CD8-positive, alpha-beta T cell (primary cell): ENCODE measurements at regions of chr3 and their contacts with region 1.

Region 1: GRCh38 chr3:27357665-27358258 is 11.4 kb downstream of the NEK10 start:
- DNase-seq: peak; percentile 11 to 77 (median 54)
- ATAC-seq: peak; percentile 87
- H3K4me3 ChIP-seq: no peak overlapping the region
- H3K4me3 Mint-ChIP-seq: no peak overlapping the region
- H3K27ac ChIP-seq: no peak overlapping the region
- H3K27ac Mint-ChIP-seq: no peak overlapping the region
- H3K4me1 ChIP-seq: peaks cover 13% of the 10 kb centered on the region
- H3K4me1 Mint-ChIP-seq: peaks cover 27% of the 10 kb centered on the region
- H3K27me3 ChIP-seq: no peaks in the 10 kb centered on the region
- H3K27me3 Mint-ChIP-seq: no peaks in the 10 kb centered on the region
- CTCF ChIP-seq: no peak

Region 2: DNA sequence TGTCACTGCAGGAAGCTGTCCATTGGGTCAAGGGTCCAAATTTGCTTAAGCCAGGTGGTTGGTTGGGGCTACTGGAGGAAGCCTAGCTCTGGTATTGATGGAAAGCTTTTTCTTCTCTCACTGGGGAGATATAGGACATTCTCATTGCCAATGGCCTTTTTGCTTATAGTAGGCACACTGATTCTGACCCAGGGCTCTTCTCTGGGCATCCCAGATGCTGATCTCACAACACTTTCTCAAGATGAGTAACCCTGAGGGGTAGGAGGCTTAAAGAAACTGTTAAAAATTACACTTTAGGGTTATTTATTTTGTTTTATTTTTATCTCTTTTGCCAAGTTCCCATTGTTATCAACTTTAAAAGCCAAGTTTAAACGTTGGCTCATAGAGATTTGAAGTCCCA is 397.4 kb before region 1 on chr3:
- CTCF ChIA-PET with region 1: no interaction called
- POLR2A ChIA-PET with region 1: no interaction called
- intact Hi-C with region 1: no loop called
- DNase-seq: no peak
- ATAC-seq: no peak
- H3K4me3 ChIP-seq: no peak overlapping the region
- H3K4me3 Mint-ChIP-seq: no peak overlapping the region
- H3K27ac ChIP-seq: no peak overlapping the region
- H3K27ac Mint-ChIP-seq: no peak overlapping the region
- H3K4me1 ChIP-seq: no peaks in the 10 kb centered on the region
- H3K4me1 Mint-ChIP-seq: no peaks in the 10 kb centered on the region
- H3K27me3 ChIP-seq: no peaks in the 10 kb centered on the region
- H3K27me3 Mint-ChIP-seq: no peaks in the 10 kb centered on the region
- CTCF ChIP-seq: no peak

Region 3: GRCh38 chr3:27340534-27340933 is 17.2 kb before region 1 on chr3:
- CTCF ChIA-PET with region 1: no interaction called
- POLR2A ChIA-PET with region 1: no interaction called
- intact Hi-C with region 1: no loop called
- DNase-seq: no peak
- ATAC-seq: no peak
- H3K4me3 ChIP-seq: no peak overlapping the region
- H3K4me3 Mint-ChIP-seq: no peak overlapping the region
- H3K27ac ChIP-seq: no peak overlapping the region
- H3K27ac Mint-ChIP-seq: no peak overlapping the region
- H3K4me1 ChIP-seq: no peaks in the 10 kb centered on the region
- H3K4me1 Mint-ChIP-seq: peaks cover 3% of the 10 kb centered on the region
- H3K27me3 ChIP-seq: peaks cover 0 to 2% of the 10 kb centered on the region in 2 experiments
- H3K27me3 Mint-ChIP-seq: no peaks in the 10 kb centered on the region
- CTCF ChIP-seq: no peak

Region 4: DNA sequence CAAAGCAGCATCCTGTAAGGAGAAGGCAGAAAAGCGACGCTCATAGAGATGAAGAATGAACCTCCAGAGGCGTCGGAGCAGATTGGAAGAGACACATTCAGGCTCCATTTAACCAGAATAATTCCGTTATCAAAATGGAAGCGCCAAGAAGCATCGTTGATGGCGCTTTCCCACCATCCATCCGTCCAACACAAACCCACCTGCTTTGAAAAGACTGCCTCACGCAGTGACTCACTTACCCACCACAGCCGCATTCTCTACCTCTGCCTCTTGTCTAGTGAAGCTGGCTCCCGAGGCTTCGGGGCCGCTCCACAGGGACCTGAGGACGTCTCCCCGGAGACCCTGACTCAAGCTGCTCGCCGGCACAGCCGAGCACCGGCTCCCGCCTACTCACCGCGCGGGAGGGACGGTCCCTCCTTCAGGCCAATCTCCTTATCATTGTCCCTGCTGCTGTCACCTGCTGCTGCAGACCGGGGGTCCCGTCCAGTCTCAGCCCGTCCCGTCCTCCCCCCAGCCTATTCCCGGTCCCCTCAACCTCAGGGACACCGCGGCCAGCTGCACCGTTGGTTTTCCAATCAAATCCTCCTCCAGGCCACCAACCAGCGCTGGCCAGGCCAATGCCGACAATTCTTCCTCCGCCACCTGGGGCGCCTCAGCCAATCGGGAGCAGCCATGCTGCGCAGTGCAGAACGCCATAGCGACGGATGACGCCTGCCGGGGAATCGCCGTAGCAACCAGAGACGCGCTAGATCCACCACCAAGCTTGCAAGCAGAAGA is 11.3 kb after region 1 on chr3 and contains the start of gene NEK10:
- CTCF ChIA-PET with region 1: interaction called, 9 read pairs
- POLR2A ChIA-PET with region 1: interaction called, 3 read pairs
- intact Hi-C with region 1: loop called in 1 of 2 experiments (anchors 1 kb)
- DNase-seq: peak; percentile 86 to 94 (median 93)
- ATAC-seq: peak; percentile 96
- H3K4me3 ChIP-seq: peak within 1 kb of the TSS; percentile 85 to 89
- H3K4me3 Mint-ChIP-seq: peak within 1 kb of the TSS; percentile 97
- H3K27ac ChIP-seq: peak within 1 kb of the TSS; percentile 15 to 22
- H3K27ac Mint-ChIP-seq: peak within 1 kb of the TSS; percentile 81
- H3K4me1 ChIP-seq: peaks cover 8% of the 10 kb centered on the region
- H3K4me1 Mint-ChIP-seq: peaks cover 16% of the 10 kb centered on the region
- H3K27me3 ChIP-seq: no peaks in the 10 kb centered on the region
- H3K27me3 Mint-ChIP-seq: no peaks in the 10 kb centered on the region
- CTCF ChIP-seq: no peak
- total RNA-seq, gene NEK10: 0.22 to 0.94 TPM

Region 5: DNA sequence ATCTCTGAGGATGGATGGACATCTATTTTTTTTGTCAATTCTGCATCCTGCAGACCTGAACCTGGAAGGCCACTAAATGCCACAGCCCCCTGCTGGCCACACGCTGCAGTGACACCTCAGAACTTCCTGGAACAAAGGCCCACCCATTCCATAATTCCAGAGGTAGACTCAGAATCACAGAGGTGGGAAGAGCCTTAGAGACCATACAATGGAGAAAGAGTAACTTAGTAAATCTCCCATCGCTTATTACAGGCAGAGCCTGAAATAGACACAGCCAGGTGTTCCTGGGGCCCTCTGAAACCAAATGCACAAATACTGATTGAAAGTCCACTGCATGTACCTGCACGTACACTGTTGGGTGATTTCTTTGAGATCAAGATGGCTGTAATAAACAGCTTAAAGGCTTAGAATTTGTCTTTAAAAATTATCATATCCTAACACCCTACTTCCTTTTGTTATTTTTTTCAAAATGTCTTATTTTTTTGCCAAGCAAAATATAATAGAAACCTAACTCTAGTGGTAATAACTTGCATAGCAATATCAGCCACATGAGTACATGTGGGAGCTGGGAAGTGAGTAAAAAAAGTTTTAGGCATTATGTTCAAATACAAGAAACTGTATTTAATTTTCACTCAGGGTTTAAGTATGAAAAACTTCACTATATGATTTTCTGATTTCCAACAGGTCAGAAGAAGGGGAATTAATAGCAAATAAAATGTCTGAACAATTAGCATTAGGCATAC is 301.7 kb after region 1 on chr3:
- CTCF ChIA-PET with region 1: no interaction called
- POLR2A ChIA-PET with region 1: no interaction called
- intact Hi-C with region 1: loop called in 1 of 2 experiments (anchors 5 kb)
- DNase-seq: peak in 8 of 9 experiments; percentile 23 to 69 (median 46)
- ATAC-seq: peak; percentile 70
- H3K4me3 ChIP-seq: no peak overlapping the region
- H3K4me3 Mint-ChIP-seq: no peak overlapping the region
- H3K27ac ChIP-seq: no peak overlapping the region
- H3K27ac Mint-ChIP-seq: no peak overlapping the region
- H3K4me1 ChIP-seq: no peaks in the 10 kb centered on the region
- H3K4me1 Mint-ChIP-seq: no peaks in the 10 kb centered on the region
- H3K27me3 ChIP-seq: no peaks in the 10 kb centered on the region
- H3K27me3 Mint-ChIP-seq: peaks cover 2% of the 10 kb centered on the region
- CTCF ChIP-seq: peak; percentile 91

Region 6: DNA sequence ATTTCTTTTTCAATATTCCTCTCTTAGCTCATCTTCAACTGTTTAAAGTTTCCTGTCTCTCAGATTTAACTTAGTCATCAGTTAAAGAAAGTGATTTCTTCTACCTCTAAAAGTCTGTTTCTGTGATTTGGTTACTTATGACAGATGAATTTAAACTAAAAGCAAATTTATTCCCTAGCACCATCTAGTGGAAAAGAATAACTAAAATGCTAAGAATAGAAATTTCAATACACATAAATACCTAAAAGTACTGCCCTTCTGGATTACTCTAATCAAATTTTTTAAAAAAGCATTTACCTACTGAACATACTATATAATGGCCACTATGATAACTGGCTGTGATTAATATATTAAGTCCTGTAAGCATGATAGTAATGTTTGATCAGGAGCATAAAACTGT is 976.8 kb after region 1 on chr3:
- CTCF ChIA-PET with region 1: no interaction called
- POLR2A ChIA-PET with region 1: no interaction called
- intact Hi-C with region 1: loop called (anchors 5 kb)
- DNase-seq: peak in 1 of 9 experiments; percentile 27
- ATAC-seq: no peak
- H3K4me3 ChIP-seq: no peak overlapping the region
- H3K4me3 Mint-ChIP-seq: no peak overlapping the region
- H3K27ac ChIP-seq: no peak overlapping the region
- H3K27ac Mint-ChIP-seq: no peak overlapping the region
- H3K4me1 ChIP-seq: peaks cover 7% of the 10 kb centered on the region
- H3K4me1 Mint-ChIP-seq: peaks cover 12% of the 10 kb centered on the region
- H3K27me3 ChIP-seq: no peaks in the 10 kb centered on the region
- H3K27me3 Mint-ChIP-seq: no peaks in the 10 kb centered on the region
- CTCF ChIP-seq: peak; percentile 42